Left colon (tissue), 2 donors: ENCODE measurements at regions of chr5 and their contacts with region 1.

Region 1: DNA sequence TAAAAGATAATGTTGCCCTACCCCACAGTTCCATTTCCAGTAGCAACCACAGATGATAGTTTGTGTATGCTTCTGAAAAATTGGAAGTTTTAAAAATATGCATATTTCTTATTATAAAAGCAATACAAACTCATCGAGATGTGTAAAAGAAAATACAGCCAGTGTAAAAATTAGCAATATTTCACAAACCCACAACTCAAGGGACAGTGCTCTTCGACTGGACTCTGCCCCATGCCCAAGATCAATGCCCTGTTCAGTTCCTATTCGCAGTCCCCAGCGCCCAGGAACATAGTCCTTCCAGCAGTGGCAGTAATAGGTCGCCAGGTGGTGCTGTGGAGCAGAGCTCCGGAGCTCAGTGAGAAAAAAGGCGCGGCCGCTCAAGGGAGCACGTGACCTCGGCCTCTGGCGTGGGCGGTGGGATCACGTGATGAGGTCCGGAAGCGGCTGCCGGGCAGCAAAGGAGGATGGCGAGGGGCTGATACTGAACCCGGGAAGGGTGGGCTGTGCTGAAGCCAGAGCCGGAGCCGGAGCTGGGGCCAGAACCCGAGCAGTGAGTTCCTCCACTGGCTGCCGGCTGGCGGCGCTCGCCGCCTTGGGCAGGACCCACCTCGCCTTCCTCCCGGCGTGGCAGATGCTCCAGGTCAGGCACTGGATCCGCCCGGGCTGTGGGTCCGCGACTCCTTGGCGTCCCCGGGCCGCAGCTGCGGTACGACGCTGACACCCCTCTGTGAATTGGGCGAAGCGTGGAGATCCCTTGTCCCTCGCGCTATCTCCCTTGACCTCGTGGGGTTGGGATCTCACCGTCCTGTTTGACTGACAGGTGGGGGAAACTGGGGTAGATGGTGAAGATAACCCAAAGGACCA is at the start of gene SLC36A1:
- DNase-seq: peak; percentile 93 to 97
- ATAC-seq: peak; percentile 88
- total RNA-seq, gene SLC36A1: 46.1 to 52.5 TPM

Region 2: DNA sequence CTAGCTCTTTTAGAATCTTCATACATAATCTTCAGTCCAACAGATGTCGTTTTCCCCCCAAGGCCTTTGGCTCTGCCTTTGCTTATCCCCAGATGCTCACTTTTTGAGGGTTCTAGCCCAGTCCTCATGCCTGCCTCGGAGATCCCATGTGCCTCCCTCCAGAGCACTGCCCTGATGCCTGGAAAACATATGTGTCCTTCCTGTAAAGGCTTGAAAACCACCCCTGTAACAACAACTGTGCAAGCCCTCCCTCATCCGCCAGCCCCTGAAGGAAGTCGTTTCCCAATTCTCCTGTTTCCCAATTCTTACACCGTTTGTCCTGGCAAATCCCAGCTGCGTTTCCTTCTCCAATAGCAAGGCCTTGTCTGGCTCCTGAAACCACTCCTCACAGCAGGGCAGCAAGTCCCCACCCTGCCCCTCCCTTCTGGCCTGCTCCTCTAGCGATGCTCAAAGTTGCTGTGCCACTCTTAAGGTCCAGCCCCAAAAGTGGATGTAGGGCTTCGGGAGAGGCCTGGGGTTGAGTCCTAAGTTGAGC is 52.2 kb after region 1 on chr5:
- intact Hi-C with region 1: loop called in 1 of 2 experiments (anchors 5 kb)
- DNase-seq: no peak
- ATAC-seq: peak; percentile 15

Region 3: DNA sequence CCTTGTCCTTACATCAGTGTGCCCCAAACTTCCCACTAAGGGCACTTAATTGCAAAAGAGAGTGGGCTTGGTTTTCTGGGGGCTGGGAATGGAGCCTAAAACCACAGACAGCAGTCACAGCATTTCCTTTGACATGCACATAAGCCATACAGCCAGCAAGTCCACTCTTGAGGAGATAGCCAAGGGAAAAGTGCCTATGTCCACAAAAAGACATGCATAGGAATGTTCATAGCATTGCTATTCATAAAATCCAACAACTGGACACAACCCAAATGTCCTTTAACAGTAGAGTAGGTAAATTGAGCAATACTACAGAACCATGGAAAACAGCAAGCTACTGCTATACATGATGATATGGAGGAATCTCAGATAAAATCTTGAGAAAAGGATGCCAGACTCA is 155.4 kb after region 1 on chr5:
- intact Hi-C with region 1: no loop called
- DNase-seq: no peak
- ATAC-seq: no peak

Region 4: DNA sequence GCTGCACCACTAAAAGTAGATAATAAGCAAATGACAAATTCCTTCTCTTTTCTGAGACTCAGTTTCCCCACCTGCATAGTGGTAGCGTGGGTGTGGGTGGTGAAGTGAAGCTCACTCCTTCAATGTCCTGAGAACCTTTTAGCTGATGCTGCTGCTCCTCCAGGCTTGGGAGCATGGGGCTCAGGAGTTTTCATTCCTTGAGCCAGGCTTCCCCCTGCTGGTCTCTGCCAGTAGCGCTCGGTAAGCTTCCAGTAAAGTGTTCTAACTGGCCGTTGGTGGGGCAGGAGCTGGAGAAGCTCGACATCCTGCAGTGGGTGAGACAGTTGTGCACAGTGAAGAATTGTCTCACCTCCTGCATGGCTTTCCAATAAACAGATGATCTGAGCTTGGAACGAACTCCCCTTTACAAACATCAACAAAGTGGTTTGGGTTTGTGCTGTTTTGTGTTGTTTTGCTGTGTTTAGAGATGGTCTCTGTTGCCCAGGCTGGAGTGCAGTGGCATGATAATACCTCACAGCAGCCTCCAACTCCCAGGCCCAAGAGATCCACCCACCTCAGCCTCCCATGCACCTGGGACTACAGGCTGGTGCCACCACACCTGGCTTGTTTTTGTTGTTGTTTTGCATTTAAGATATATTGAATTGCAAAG is 204.7 kb after region 1 on chr5:
- intact Hi-C with region 1: loop called (anchors 2 to 10 kb)
- DNase-seq: peak; percentile 54 to 80
- ATAC-seq: peak; percentile 93

Region 5: DNA sequence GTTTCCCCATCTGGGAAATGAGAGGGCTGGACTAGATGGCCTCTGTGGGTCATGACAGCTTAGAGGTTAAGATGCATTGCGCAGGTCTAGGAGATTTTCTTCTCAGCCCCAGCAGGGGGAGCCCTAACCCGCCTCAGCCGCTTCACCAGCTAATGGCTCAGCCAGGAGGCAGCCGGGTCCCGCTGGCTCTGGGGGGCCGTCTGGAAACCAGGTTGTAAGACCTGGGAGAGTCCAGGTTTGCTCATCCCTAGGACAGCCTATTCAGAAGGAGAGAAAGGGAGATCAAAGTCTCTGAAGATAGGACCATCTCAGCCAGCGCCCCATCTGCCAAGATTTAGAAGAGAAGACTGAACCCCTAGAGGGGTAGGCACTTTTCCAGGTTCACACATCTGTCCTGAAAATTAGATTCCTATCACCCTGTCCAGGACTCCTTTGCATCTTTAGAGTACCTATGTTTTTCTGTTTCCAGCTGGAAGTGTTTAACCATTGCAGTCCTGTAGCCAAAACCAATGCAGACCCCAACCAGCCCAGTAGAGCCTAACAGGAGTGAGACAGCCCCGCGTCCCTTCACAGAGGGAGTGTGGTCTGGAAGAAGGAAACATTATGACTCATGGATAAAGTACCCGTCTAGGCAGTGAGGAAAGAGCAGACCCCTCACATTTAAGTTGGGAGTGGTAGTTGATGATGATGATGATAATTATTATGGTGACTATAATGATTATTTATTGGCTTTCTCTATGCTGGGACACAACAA is 211.8 kb after region 1 on chr5:
- intact Hi-C with region 1: loop called in 1 of 2 experiments (anchors 10 kb)
- DNase-seq: peak; percentile 50 to 64
- ATAC-seq: peak; percentile 93